Heart right ventricle (tissue), 16 donors: ENCODE measurements at regions of chr1 and their contacts with region 1.

Region 1: GRCh38 chr1:231544943-231545592 is 16.6 kb downstream of the TSNAX start:
- DNase-seq: no peak
- ATAC-seq: peak; percentile 35 to 92 (median 82)
- H3K4me3 ChIP-seq: no peak overlapping the region
- H3K27ac ChIP-seq: peak overlapping the region in 7 of 10 donors; percentile 9 to 64 (median 33)
- H3K4me1 ChIP-seq: peaks cover 0 to 65% (median 33%) of the 10 kb centered on the region in 9 donors
- H3K27me3 ChIP-seq: no peaks in the 10 kb centered on the region
- CTCF ChIP-seq: no peak

Region 2: DNA sequence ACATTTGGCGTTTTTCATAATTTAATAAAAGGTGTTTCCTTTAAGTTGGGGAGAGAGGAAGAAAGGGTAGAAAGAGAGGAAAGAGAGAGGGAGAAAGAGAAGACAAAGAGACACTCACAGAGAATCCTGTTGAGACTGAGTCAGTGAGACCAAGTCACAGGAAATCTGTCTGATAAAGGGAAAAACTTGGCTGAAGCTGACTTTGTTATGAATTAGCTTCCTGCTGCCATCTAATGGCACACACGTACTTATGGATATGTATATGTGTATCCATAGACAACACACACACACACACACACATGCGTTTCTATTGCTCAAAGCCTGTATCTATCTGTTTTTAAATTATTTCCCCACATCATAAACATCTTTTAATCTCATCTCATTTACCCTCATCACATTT is 39.1 kb after region 1 on chr1:
- intact Hi-C with region 1: loop called in 1 of 10 experiments (anchors 5 kb)
- DNase-seq: no peak
- ATAC-seq: peak in 3 of 8 donors; percentile 29 to 58 (median 49)
- H3K4me3 ChIP-seq: no peak overlapping the region
- H3K27ac ChIP-seq: peak overlapping the region in 3 of 10 donors; percentile 31 to 57 (median 45)
- H3K4me1 ChIP-seq: peaks cover 0 to 42% (median 3%) of the 10 kb centered on the region in 9 donors
- H3K27me3 ChIP-seq: no peaks in the 10 kb centered on the region
- CTCF ChIP-seq: peak in 5 of 9 donors; percentile 10 to 41 (median 21)

Region 3: GRCh38 chr1:231596337-231596791 is 51.3 kb after region 1 on chr1:
- intact Hi-C with region 1: loop called in 1 of 10 experiments (anchors 5 kb)
- DNase-seq: no peak
- ATAC-seq: peak in 4 of 8 donors; percentile 26 to 53 (median 43)
- H3K4me3 ChIP-seq: no peak overlapping the region
- H3K27ac ChIP-seq: peak overlapping the region in 7 of 10 donors; percentile 23 to 68 (median 37)
- H3K4me1 ChIP-seq: peaks cover 0 to 41% (median 15%) of the 10 kb centered on the region in 9 donors
- H3K27me3 ChIP-seq: no peaks in the 10 kb centered on the region
- CTCF ChIP-seq: no peak